Caco-2 (cell line): ENCODE measurements at regions of chr11 and their contacts with region 1.

Region 1: DNA sequence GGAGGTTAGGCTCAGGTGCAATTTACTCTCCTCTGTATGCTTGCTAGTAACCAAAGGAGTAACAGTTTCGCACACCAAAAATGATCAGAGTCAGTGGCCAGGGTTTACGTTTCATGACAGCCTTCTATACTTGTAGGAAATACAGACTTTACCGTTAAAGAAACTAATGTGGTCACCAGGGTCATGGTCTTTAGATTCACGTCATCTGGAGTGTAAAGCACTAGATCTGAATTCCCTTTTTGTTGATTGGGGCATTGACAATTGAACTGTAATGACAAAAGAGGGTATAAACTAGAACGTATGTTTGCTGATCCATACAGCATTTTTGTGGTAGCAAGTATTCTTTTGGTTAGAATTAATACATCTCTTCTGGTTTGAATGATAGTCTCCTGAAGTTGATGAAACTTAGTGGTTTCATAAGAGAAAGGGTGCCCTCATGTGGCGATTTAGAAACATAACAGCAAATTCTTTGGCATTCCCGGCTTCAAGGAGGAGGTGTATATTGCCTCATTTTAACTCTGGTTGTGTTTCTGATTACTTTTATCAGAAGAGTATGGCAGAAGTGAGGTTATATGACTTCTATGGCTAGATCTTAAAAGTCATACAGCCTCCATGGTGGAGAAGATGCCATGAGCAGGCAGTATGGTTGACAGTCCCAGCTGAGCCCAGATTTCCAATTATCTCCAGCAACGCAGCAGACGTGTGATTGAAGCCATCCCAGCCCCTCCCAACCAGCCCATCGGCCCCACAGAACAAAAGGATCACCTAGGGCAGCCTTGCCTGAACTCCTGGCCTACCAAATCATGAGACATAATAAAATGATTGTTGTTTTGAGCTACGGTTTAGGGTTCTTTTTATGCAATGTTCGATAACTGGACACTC is 35.1 kb downstream of the MMP7 start:
- DNase-seq: peak; percentile 57 to 81
- H3K4me3 ChIP-seq: no peak overlapping the region
- H3K4me3 Mint-ChIP-seq: peak overlapping the region; percentile 34
- H3K27ac Mint-ChIP-seq: peak overlapping the region; percentile 72
- H3K4me1 ChIP-seq: peaks cover 33% of the 10 kb centered on the region
- H3K4me1 Mint-ChIP-seq: peaks cover 25% of the 10 kb centered on the region
- H3K27me3 ChIP-seq: no peaks in the 10 kb centered on the region
- H3K27me3 Mint-ChIP-seq: no peaks in the 10 kb centered on the region
- CTCF ChIP-seq: peak; percentile 82 to 93

Region 2: DNA sequence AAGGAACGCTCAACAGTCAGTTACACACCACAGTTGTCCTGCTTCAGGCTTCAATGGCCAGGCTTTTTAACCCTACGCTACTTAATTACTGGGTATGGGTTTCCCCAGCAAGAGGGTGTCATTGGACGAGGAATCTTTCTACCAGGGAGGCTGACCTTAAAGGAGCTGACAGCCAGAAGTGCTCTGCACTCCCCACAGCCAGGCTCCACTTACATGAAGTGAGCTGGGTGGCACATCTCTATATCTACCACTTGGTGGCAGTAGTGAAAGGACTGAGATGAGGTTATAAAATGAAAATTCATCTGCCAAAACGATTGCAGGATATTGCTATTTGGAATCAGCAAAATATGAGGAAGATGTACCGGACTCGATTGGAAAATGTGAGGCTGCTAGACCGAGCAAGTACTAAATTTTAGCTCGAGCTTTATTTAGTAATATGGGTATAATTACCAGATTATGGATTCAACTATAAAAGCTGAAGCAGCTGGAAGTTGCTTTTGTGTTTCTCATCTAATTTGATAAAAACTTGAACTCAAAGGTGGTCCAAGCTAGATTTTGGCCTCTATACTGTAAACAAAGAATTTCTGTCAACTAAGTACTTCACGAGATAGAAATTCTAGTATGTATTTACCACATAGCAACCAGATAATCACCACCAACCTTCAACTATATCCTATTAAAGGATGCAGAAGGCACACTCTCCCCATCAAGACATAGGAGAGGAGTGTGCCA is 634.5 kb before region 1 on chr11:
- CTCF ChIA-PET with region 1: no interaction called
- POLR2A ChIA-PET with region 1: no interaction called
- intact Hi-C with region 1: loop called (anchors 10 kb)
- DNase-seq: peak; percentile 73 to 79
- H3K4me3 ChIP-seq: no peak overlapping the region
- H3K4me3 Mint-ChIP-seq: no peak overlapping the region
- H3K27ac Mint-ChIP-seq: peak overlapping the region; percentile 71
- H3K4me1 ChIP-seq: peaks cover 28% of the 10 kb centered on the region
- H3K4me1 Mint-ChIP-seq: peaks cover 25% of the 10 kb centered on the region
- H3K27me3 ChIP-seq: no peaks in the 10 kb centered on the region
- H3K27me3 Mint-ChIP-seq: no peaks in the 10 kb centered on the region
- CTCF ChIP-seq: peak; percentile 89 to 95

Region 3: DNA sequence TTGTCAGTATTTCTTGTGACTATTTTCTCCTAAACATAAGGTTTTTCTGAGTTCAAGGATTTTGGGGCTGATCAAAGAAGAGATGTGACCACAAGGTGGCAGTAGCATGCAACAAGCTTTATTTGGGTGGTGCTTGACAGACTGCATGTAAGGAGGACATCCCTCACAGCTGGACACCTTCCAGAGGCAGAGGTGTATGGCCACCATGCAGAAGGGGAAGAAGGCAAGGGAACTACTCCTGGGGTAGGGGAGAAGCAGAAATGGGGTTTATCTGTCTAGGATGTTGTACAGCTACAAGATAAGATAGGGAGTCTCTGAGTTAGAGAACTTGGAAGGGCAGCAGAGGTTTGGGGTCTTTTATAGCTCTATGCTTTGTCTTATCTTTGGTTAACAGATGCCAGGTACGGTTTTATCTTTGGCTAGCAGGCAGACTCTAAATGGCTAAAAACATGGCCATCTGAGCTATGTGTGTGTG is 153.5 kb before region 1 on chr11:
- CTCF ChIA-PET with region 1: interaction called, 8 read pairs
- POLR2A ChIA-PET with region 1: interaction called, 3 read pairs
- intact Hi-C with region 1: loop called (anchors 1 kb)
- DNase-seq: peak; percentile 86 to 87
- H3K4me3 ChIP-seq: no peak overlapping the region
- H3K4me3 Mint-ChIP-seq: no peak overlapping the region
- H3K27ac Mint-ChIP-seq: no peak overlapping the region
- H3K4me1 ChIP-seq: peaks cover 4% of the 10 kb centered on the region; the same call in 1 of the 2 replicates
- H3K4me1 Mint-ChIP-seq: peaks cover 16% of the 10 kb centered on the region
- H3K27me3 ChIP-seq: no peaks in the 10 kb centered on the region
- H3K27me3 Mint-ChIP-seq: no peaks in the 10 kb centered on the region
- CTCF ChIP-seq: peak; percentile 92 to 95

Region 4: GRCh38 chr11:102367364-102367763 is 128.0 kb before region 1 on chr11:
- CTCF ChIA-PET with region 1: interaction called, 5 read pairs
- POLR2A ChIA-PET with region 1: no interaction called
- intact Hi-C with region 1: loop called (anchors 1 kb)
- DNase-seq: no peak
- H3K4me3 ChIP-seq: no peak overlapping the region
- H3K4me3 Mint-ChIP-seq: no peak overlapping the region
- H3K27ac Mint-ChIP-seq: no peak overlapping the region
- H3K4me1 ChIP-seq: no peaks in the 10 kb centered on the region
- H3K4me1 Mint-ChIP-seq: no peaks in the 10 kb centered on the region
- H3K27me3 ChIP-seq: no peaks in the 10 kb centered on the region
- H3K27me3 Mint-ChIP-seq: no peaks in the 10 kb centered on the region
- CTCF ChIP-seq: peak; percentile 25 to 46

Region 5: GRCh38 chr11:102430158-102430836 is 65.1 kb before region 1 on chr11:
- CTCF ChIA-PET with region 1: interaction called, 4 read pairs
- POLR2A ChIA-PET with region 1: no interaction called
- intact Hi-C with region 1: loop called (anchors 1 kb)
- DNase-seq: no peak
- H3K4me3 ChIP-seq: no peak overlapping the region
- H3K4me3 Mint-ChIP-seq: no peak overlapping the region
- H3K27ac Mint-ChIP-seq: peak overlapping the region; percentile 28
- H3K4me1 ChIP-seq: peaks cover 41% of the 10 kb centered on the region
- H3K4me1 Mint-ChIP-seq: peaks cover 40% of the 10 kb centered on the region
- H3K27me3 ChIP-seq: no peaks in the 10 kb centered on the region
- H3K27me3 Mint-ChIP-seq: no peaks in the 10 kb centered on the region
- CTCF ChIP-seq: no peak

Region 6: GRCh38 chr11:102530558-102530957 is 35.2 kb after region 1 on chr11 and contains the start of gene MMP7:
- CTCF ChIA-PET with region 1: no interaction called
- POLR2A ChIA-PET with region 1: no interaction called
- intact Hi-C with region 1: loop called (anchors 1 kb)
- DNase-seq: no peak
- H3K4me3 ChIP-seq: no peak within 1 kb of the TSS
- H3K4me3 Mint-ChIP-seq: no peak within 1 kb of the TSS
- H3K27ac Mint-ChIP-seq: no peak within 1 kb of the TSS
- H3K4me1 ChIP-seq: peaks cover 14% of the 10 kb centered on the region
- H3K4me1 Mint-ChIP-seq: peaks cover 14% of the 10 kb centered on the region
- H3K27me3 ChIP-seq: no peaks in the 10 kb centered on the region
- H3K27me3 Mint-ChIP-seq: no peaks in the 10 kb centered on the region
- CTCF ChIP-seq: no peak
- total RNA-seq, gene MMP7: 1.0 TPM in 1 of 2 replicates, not detected in the other